Ovary (tissue), 10 donors: ENCODE measurements at regions of chr10 and their contacts with region 1.

Region 1: DNA sequence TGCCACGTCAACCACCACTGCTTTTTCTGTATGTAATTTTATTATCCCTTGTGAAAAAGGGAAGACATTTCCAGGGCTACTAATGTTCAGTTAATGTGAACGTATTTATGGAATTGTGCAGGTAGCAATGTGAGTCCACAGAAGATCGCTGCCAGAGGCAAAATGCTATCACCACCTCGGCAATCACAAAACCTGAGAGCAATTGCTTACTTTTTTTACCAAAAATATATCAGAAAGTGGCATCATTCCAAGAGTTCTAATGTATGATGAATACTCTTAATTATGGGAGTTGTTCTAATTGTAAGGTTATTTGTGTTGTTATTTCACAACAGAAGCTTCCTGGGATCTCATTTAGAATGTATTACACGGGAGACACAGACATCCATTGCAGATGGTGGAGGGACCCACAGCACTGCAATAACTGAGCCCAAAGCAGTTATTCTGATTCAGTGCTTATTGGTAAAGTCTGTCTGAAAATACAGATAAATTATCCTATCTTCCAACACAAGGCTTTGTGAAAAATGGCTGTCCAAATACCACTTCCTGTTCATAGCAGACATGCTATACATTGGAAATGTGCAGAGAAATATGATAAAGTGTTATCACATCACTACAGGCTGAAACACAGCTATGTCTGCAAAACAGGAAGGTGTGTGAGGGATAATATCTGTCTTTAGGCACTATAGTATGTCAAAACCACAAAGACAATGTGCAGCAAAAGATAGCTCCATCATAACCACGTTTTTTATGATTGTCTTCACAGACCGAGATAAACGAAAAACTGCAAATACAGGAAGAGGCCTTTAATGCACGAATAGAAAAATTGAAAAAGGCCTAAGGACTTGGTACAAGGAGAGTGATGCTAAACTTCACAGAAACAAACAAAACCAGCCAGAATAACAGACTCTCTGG is 102.7 kb downstream of the CABCOCO1 start:
- DNase-seq: no peak
- H3K4me3 ChIP-seq: no peak overlapping the region
- H3K27ac ChIP-seq: no peak overlapping the region
- H3K4me1 ChIP-seq: no peaks in the 10 kb centered on the region
- H3K27me3 ChIP-seq: no peaks in the 10 kb centered on the region
- CTCF ChIP-seq: no peak
- EP300 ChIP-seq: no peak
- POLR2A ChIP-seq: no peak

Region 2: DNA sequence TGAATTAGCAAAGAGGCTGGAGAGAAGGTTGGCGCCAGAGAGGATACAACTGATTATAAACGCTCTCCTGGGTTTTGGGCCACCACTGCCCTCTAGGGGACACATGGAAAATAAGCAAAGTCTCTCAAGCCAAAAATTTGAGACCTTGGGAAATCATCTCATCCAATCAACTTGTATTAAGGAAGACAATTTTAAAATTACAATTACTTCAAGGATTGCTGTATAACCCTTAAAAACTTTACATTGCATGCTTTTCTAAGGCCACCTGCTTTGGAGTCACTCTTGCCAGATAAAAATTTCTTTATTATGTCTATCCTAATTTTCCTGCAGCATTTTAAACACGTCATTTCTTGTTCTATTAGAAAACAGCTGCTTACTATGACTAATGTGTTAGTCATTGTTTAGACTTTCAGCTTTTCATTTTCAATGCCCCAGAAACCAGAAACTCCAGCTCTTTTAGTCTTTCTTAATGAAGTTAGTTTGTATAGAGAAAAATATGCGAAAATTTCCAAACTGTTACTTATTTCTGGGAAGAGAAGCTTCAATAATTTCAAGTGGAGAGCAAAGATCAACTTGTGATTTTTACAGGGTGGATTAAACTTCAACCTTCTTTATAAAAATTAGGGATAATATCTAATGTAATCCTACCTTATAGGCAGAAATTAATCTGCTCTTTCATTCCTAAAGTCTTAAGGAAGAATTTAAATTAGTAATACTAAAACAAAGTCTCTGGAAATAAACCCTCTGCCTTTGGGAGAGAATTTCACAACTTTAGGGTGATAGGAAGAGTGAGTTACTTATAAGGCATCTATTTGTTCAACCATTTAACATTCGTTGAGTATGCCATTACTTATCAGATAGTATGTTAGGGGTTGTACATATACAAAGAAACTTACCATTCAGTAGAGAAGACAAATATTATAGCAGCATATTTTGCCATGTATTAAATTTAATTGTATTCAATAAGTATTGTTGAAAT is 800.9 kb before region 1 on chr10:
- intact Hi-C with region 1: loop called in 1 of 4 experiments (anchors 5 kb)
- DNase-seq: peak; percentile 62 to 80 (median 68)
- H3K4me3 ChIP-seq: no peak overlapping the region
- H3K27ac ChIP-seq: peak overlapping the region in 1 of 2 donors; percentile 16
- H3K4me1 ChIP-seq: no peaks in the 10 kb centered on the region
- H3K27me3 ChIP-seq: no peaks in the 10 kb centered on the region
- CTCF ChIP-seq: peak; percentile 70 to 85 (median 73)
- EP300 ChIP-seq: no peak
- POLR2A ChIP-seq: no peak

Region 3: GRCh38 chr10:61733358-61733940 is 32.0 kb before region 1 on chr10:
- intact Hi-C with region 1: no loop called
- DNase-seq: peak in 1 of 5 donors; percentile 17
- H3K4me3 ChIP-seq: no peak overlapping the region
- H3K27ac ChIP-seq: no peak overlapping the region
- H3K4me1 ChIP-seq: no peaks in the 10 kb centered on the region
- H3K27me3 ChIP-seq: no peaks in the 10 kb centered on the region
- CTCF ChIP-seq: peak in 2 of 3 donors; percentile 12 to 32
- EP300 ChIP-seq: no peak
- POLR2A ChIP-seq: no peak

Region 4: DNA sequence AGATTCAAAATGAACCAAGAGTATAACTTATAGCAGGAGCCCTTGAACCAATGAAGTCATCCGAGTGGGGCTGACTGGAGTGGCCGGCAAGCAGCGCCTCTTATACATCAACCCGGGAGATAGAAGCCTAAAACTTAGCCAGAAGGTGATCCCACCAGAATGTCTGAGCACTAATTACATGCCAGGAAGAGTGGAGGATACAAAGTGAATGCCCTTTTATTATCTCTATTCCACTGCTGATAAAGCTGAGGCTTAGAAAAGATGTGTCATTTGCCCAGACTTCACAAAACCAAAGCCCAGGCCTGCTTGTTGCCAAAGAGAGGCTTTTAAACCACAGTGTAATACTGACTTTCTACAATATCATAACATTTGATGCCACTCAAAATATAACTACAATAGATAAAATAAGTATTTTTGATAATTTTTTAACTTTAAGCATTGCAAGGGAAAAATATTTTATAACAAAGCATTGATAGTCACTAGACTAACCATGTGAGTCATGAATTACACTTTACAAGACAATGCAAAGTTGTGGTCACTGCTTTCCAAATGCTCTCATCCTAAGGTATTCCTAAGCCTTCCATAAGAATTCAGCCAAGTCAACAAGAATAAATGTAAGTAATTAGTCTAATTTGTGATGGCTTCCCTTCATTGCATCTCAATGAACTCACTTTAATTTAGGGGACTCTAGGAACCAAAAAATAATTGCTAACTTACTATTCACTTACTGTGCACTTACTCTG is 77.5 kb after region 1 on chr10:
- intact Hi-C with region 1: no loop called
- DNase-seq: no peak
- H3K4me3 ChIP-seq: no peak overlapping the region
- H3K27ac ChIP-seq: no peak overlapping the region
- H3K4me1 ChIP-seq: peaks cover 1% of the 10 kb centered on the region
- H3K27me3 ChIP-seq: no peaks in the 10 kb centered on the region
- CTCF ChIP-seq: no peak
- EP300 ChIP-seq: no peak
- POLR2A ChIP-seq: no peak

Region 5: DNA sequence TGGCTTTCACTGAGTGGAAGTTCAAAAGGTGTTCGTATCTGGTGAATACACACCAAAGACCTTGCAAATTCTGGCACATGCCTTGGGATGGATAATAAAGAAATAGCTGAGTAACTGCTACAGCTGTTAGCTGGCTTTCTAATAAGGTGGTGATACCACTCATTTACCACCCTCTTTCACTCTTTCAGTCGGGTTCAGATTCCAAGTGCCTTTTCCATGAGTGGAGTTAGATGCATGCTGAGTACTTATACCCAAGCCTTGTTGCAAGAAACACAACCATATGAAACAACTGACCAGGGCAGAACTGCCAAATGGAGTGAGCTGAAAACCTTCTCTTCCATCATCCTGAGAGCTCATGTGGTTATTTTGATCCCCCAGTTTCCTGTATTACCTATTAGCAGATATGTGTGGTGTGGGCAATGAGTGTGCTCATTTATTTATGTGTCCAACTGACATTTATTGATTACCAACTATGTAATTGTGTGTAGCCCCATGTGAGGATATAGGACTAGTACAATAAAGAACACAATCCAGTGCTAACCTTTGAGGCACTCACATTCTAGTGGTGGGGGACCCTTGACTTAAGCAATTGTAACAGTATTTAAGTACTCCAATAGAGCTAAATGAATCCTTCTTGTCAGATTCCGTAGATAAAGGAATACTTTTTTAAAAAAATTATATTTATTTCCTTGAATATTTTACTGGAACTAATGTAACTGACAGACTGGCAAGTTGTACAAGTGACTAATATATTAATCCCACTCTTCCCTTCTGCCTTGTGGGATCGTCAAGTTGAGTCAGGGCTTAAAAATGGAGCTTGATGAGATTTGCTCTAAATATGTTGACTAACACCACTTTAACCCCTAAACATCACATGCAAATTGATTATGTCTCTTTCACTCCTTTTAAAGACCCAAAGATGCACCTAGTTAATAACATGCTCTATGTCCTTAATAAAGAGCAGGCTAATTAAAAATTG is 260.8 kb after region 1 on chr10:
- intact Hi-C with region 1: no loop called
- DNase-seq: no peak
- H3K4me3 ChIP-seq: no peak overlapping the region
- H3K27ac ChIP-seq: no peak overlapping the region
- H3K4me1 ChIP-seq: peaks cover 2% of the 10 kb centered on the region
- H3K27me3 ChIP-seq: no peaks in the 10 kb centered on the region
- CTCF ChIP-seq: no peak
- EP300 ChIP-seq: no peak
- POLR2A ChIP-seq: no peak